B cell (primary cell): ENCODE measurements at regions of chr1 and their contacts with region 1.

Region 1: DNA sequence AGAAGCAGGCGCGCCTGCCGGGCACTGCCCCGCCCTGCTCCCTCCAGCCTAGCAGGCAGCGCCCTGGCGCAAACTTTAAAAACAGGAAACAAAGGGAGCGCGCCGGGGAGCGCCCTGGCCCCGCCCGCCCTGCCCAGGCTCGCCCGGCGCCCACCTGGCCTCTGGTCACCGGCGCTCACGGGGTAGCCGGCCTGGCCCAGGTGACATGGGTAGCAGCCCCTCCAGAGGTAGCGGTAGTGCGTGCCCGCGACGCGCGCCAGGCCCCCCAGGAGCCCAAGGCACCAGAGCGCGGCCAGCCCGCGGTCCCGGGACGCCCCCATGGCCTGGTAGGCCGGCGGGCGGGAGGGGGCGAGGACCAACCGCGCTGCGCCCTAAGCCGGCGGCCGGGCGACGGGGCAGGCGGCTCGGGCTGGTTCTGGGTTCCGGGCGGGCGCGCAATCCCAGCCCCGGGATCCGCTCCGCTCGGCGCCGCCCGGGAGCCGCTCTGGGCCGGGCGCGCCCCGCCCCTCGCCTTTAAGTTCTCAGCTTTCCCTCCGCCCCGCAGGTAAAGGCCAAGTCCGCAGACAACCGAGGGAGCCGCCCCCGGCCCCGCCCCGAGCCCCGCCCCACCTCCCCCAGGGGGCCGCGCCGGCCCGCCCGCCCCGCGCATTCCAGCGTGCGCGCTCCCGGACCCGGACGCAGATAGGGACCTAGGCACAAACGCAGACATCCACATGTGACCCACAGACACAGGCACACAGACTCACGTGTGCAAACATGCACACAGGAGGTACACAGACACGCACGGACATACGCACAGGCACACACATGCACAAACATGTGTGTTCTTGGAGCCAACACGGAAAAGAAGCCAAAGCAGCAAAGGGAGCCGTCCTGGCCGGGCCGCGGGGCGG is 76.7 kb downstream of the ARHGEF16 start:
- DNase-seq: peak; percentile 84
- ATAC-seq: peak; percentile 81
- H3K4me3 ChIP-seq: peak overlapping the region; percentile 45 to 74 (median 61)
- H3K4me3 Mint-ChIP-seq: peak overlapping the region; percentile 86
- H3K27ac ChIP-seq: peak overlapping the region; percentile 52 to 71
- H3K27ac Mint-ChIP-seq: peak overlapping the region; percentile 85
- H3K4me1 ChIP-seq: peaks cover 9 to 14% of the 10 kb centered on the region in 2 donors
- H3K4me1 Mint-ChIP-seq: peaks cover 17% of the 10 kb centered on the region
- H3K27me3 ChIP-seq: no peaks in the 10 kb centered on the region
- H3K27me3 Mint-ChIP-seq: no peaks in the 10 kb centered on the region
- CTCF ChIP-seq: no peak

Region 2: GRCh38 chr1:3491291-3492246 is 39.6 kb before region 1 on chr1:
- CTCF ChIA-PET with region 1: no interaction called
- POLR2A ChIA-PET with region 1: interaction called, 5 read pairs
- intact Hi-C with region 1: loop called (anchors 1 kb)
- DNase-seq: peak; percentile 89
- ATAC-seq: peak; percentile 98
- H3K4me3 ChIP-seq: peak overlapping the region in 3 of 5 experiments; percentile 12 to 37 (median 36)
- H3K4me3 Mint-ChIP-seq: peak overlapping the region; percentile 69
- H3K27ac ChIP-seq: no peak overlapping the region
- H3K27ac Mint-ChIP-seq: peak overlapping the region; percentile 10
- H3K4me1 ChIP-seq: peaks cover 0 to 7% of the 10 kb centered on the region in 2 donors
- H3K4me1 Mint-ChIP-seq: peaks cover 6% of the 10 kb centered on the region
- H3K27me3 ChIP-seq: no peaks in the 10 kb centered on the region
- H3K27me3 Mint-ChIP-seq: no peaks in the 10 kb centered on the region
- CTCF ChIP-seq: peak; percentile 100